Gastrocnemius medialis (tissue), 4 donors: ENCODE measurements at regions of chr20 and their contacts with region 1.

Region 1: DNA sequence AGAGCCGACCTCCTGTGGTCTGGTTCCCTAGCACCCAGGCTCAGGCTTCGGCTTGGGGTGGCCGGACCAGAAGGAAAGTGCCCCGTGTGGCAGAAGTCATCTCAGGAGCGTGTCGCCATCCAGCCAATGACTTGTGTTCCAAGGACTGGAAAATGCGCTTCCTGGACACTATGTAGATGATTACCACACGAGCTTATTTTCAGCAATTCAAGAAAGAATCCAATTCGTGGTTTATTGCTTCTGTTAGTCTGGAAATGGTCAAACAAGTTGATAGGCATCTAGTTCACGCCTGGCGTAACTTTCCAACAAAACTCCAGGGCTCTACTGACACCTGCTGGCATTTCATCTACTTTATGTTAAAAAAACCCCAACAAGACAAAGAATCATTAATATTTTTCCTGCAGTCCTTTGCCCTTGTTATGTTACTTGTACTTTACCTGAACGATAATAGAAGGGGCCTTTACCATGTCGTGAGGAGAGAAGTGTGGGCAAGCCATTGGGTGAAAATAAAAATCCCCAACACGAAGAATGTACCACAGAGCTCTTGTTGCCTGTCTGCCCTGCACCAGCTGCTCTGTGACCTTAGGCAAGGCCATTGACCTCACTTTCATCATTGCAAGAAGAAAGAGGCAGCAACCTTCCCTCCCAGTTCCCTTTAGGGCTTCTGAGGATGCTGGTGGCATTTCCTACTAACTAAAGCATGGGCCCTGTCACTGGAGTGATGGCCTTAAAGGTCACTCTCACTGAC is 154.7 kb upstream of the LAMP5 start:
- DNase-seq: peak; percentile 8 to 17
- ATAC-seq: peak; percentile 78 to 87
- H3K4me3 ChIP-seq: peak overlapping the region in 1 of 4 donors; percentile 15
- H3K27ac ChIP-seq: no peak overlapping the region
- H3K4me1 ChIP-seq: no peaks in the 10 kb centered on the region
- H3K27me3 ChIP-seq: no peaks in the 10 kb centered on the region
- CTCF ChIP-seq: peak in 4 of 5 experiments; percentile 46 to 59 (median 50)
- POLR2A ChIP-seq: no peak

Region 2: DNA sequence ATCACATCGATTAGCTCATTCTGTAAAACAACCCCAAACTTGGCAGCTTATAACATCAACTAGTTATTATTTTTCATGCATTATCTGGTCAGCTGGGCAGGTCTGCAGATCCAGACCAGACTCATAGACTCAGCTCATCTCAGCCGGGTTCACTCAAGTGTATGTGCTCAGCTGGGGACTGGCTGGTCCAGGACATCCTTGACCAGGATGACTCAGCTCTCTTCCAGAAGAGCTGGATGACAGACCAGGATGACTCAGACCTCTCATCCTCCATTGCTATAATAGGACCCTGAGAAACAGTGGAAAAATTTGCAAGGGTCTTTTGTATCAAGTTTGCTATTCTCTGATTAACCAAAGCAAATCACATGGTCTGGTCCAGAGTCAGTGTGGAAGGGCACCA is 603.3 kb before region 1 on chr20:
- in situ Hi-C with region 1: loop called in 1 of 4 experiments (anchors 10 kb)
- intact Hi-C with region 1: loop called (anchors 10 kb)
- DNase-seq: no peak
- ATAC-seq: peak in 1 of 2 donors; percentile 56
- H3K4me3 ChIP-seq: no peak overlapping the region
- H3K27ac ChIP-seq: no peak overlapping the region
- H3K4me1 ChIP-seq: no peaks in the 10 kb centered on the region
- H3K27me3 ChIP-seq: no peaks in the 10 kb centered on the region
- CTCF ChIP-seq: no peak
- POLR2A ChIP-seq: no peak

Region 3: DNA sequence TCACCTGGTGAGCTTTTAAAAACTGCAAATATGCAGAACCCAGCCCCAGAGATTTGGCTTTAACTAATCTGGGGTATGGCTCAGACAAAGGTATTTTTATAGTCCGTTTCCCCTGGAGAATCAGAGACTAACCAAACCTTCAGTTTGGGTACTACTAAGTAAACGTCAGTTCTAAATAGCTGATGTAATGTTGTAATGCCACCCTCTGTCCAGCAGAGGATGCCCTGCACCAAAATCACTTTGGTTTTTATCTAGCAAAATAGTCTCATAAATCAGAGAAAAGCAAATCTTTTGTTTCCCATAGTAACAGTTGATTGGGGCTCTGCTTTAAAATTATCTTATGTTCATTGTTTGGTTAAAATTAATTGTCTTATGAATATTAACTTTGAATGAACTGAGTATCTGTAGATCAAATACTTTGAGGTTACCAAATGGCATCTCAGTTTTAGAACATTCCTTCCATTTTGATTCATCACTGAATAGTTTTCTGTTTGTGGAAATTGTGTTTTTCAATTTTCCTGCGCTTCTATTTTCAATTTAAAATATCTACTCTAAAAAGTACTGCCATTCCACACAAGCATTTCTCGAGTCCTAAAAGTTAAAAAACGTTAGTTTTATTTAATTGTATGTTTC is 569.2 kb before region 1 on chr20:
- in situ Hi-C with region 1: loop called in 1 of 4 experiments (anchors 10 kb)
- intact Hi-C with region 1: loop called (anchors 1 kb)
- DNase-seq: no peak
- ATAC-seq: no peak
- H3K4me3 ChIP-seq: no peak overlapping the region
- H3K27ac ChIP-seq: no peak overlapping the region
- H3K4me1 ChIP-seq: no peaks in the 10 kb centered on the region
- H3K27me3 ChIP-seq: no peaks in the 10 kb centered on the region
- CTCF ChIP-seq: peak; percentile 57 to 85 (median 78)
- POLR2A ChIP-seq: no peak

Region 4: DNA sequence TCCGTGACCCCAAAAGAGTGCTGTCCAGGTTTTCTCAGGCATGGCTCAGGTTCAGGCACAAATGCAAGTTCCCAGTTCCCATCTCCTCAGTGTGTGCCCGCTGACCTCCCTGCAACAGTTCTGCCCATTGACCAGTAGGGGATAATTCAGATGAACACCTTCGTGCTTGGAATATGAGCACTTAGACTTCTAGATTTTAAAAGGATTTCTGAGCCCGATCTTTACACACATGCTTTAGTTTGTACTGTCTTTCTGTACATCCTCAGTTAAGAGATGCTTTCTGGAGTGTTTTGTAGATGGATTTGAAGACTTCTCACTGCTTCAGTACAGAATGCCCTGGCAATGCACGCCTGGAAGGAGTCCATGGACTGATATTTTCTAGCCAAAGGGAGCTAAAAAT is 530.5 kb before region 1 on chr20:
- in situ Hi-C with region 1: loop called in 1 of 4 experiments (anchors 25 kb)
- intact Hi-C with region 1: no loop called
- DNase-seq: no peak
- ATAC-seq: no peak
- H3K4me3 ChIP-seq: no peak overlapping the region
- H3K27ac ChIP-seq: no peak overlapping the region
- H3K4me1 ChIP-seq: no peaks in the 10 kb centered on the region
- H3K27me3 ChIP-seq: no peaks in the 10 kb centered on the region
- CTCF ChIP-seq: no peak
- POLR2A ChIP-seq: no peak

Region 5: DNA sequence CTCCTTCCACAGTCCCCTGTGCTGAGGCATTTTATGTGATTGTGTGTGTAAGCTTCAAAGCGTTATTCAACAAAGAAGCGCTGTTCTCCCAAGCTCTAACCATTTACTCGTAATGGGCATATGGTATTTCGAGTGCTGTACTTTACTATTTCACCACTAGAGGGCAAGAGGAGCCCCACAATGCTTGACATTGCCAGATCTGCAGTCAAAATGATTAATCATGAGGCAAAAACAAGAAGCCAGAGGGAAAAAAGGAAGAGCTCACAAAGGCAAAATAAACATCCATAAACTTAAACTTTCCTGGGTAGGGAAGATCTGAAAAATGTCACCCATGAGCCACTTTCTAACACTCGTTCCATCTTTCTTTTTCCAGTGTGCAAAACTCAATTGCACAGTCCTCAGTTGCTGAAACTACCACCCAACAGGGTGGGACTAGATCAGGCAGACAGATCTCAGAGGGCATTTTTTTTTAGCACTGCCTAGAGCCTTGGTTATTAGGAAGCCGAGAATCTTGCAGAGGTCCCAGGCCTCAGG is 505.9 kb before region 1 on chr20:
- in situ Hi-C with region 1: loop called in 3 of 4 experiments (anchors 5 to 25 kb)
- intact Hi-C with region 1: loop called (anchors 1 kb)
- DNase-seq: peak in 1 of 2 donors; percentile 7
- ATAC-seq: peak; percentile 73 to 80
- H3K4me3 ChIP-seq: peak overlapping the region in 2 of 4 donors; percentile 7 to 21
- H3K27ac ChIP-seq: peak overlapping the region; percentile 21 to 61 (median 46)
- H3K4me1 ChIP-seq: peaks cover 5 to 8% of the 10 kb centered on the region in 2 donors
- H3K27me3 ChIP-seq: no peaks in the 10 kb centered on the region
- CTCF ChIP-seq: peak; percentile 70 to 87 (median 76)
- POLR2A ChIP-seq: no peak

Region 6: DNA sequence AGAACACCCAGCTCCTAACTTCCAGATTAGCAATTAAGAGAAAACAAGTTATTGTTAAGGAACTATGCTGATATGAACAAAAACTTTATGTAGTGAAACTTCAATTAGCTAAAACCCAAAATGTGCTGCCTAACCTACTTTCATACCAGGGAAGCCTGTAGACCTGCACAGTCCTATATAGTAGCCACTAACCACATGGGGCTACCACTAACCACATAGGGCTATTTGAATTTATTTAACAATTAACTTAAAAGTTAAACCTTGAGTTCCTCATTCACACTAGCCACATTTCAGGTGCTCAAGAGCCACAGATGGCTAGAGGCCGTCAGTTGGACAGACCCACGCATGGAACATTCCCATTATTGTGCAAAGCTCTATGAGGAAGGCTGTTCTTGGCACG is 82.2 kb after region 1 on chr20:
- in situ Hi-C with region 1: no loop called
- intact Hi-C with region 1: no loop called
- DNase-seq: no peak
- ATAC-seq: no peak
- H3K4me3 ChIP-seq: no peak overlapping the region
- H3K27ac ChIP-seq: no peak overlapping the region
- H3K4me1 ChIP-seq: no peaks in the 10 kb centered on the region
- H3K27me3 ChIP-seq: no peaks in the 10 kb centered on the region
- CTCF ChIP-seq: no peak
- POLR2A ChIP-seq: no peak